Ovary (tissue), 10 donors: ENCODE measurements at regions of chr7 and their contacts with region 1.

Region 1: GRCh38 chr7:135147899-135148721 is at the start of gene TMEM140:
- DNase-seq: peak in 2 of 5 donors; percentile 42 to 57
- H3K4me3 ChIP-seq: peak within 1 kb of the TSS; percentile 36
- H3K27ac ChIP-seq: peak within 1 kb of the TSS; percentile 66 to 89
- H3K4me1 ChIP-seq: peaks cover 13% of the 10 kb centered on the region
- H3K27me3 ChIP-seq: no peaks in the 10 kb centered on the region
- CTCF ChIP-seq: no peak
- EP300 ChIP-seq: no peak
- POLR2A ChIP-seq: peak; percentile 28
- total RNA-seq, gene TMEM140: 5.9 to 9.3 (median 8.4) TPM

Region 2: GRCh38 chr7:134992626-134993179 is 155.4 kb before region 1 on chr7:
- intact Hi-C with region 1: loop called in 1 of 4 experiments (anchors 5 kb)
- DNase-seq: peak; percentile 30 to 59 (median 34)
- H3K4me3 ChIP-seq: no peak overlapping the region
- H3K27ac ChIP-seq: peak overlapping the region in 1 of 2 donors; percentile 40
- H3K4me1 ChIP-seq: peaks cover 23% of the 10 kb centered on the region
- H3K27me3 ChIP-seq: no peaks in the 10 kb centered on the region
- CTCF ChIP-seq: no peak
- EP300 ChIP-seq: no peak
- POLR2A ChIP-seq: no peak